Ovary (tissue), 10 donors: ENCODE measurements at regions of chr20 and their contacts with region 1.

Region 1: DNA sequence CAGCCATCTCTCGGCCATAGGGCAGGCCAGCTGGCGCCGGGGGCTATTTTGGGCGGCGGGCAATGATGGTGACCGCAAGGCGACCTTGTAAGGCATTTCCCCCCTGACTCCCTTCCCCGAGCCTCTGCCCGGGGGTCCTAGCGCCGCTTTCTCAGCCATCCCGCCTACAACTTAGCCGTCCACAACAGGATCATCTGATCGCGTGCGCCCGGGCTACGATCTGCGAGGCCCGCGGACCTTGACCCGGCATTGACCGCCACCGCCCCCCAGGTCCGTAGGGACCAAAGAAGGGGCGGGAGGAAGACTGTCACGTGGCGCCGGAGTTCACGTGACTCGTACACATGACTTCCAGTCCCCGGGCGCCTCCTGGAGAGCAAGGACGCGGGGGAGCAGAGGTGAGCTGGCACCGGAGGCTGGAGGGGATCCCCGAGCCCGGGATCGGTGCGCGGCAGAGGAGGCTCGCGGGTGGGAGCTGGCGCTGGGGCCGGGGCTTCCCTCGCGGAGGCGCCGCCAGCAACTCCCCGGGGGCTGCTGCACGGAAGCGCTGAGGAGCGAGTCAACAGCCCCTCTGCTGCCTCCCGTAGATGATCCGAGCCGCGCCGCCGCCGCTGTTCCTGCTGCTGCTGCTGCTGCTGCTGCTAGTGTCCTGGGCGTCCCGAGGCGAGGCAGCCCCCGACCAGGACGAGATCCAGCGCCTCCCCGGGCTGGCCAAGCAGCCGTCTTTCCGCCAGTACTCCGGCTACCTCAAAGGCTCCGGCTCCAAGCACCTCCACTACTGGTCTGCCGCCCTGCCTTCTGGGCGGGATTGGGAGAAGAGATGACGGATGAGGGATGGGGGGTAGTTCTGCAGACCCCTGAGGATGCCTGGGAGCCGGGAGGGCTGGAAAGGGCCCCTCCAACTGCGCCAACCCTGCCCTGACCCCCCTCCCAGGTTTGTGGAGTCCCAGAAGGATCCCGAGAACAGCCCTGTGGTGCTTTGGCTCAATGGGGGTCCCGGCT is at the starts of genes CTSA and NEURL2:
- DNase-seq: peak; percentile 95 to 97 (median 96)
- H3K4me3 ChIP-seq: peak within 1 kb of the TSS; percentile 53
- H3K27ac ChIP-seq: peak within 1 kb of the TSS; percentile 72 to 97
- H3K4me1 ChIP-seq: peaks cover 9% of the 10 kb centered on the region
- H3K27me3 ChIP-seq: no peaks in the 10 kb centered on the region
- CTCF ChIP-seq: peak in 1 of 3 donors; percentile 21
- EP300 ChIP-seq: peak; percentile 81
- POLR2A ChIP-seq: peak; percentile 73
- total RNA-seq, gene CTSA: 45.0 to 156 (median 110) TPM
- total RNA-seq, gene NEURL2: 10.1 to 28.7 (median 12.5) TPM

Region 2: DNA sequence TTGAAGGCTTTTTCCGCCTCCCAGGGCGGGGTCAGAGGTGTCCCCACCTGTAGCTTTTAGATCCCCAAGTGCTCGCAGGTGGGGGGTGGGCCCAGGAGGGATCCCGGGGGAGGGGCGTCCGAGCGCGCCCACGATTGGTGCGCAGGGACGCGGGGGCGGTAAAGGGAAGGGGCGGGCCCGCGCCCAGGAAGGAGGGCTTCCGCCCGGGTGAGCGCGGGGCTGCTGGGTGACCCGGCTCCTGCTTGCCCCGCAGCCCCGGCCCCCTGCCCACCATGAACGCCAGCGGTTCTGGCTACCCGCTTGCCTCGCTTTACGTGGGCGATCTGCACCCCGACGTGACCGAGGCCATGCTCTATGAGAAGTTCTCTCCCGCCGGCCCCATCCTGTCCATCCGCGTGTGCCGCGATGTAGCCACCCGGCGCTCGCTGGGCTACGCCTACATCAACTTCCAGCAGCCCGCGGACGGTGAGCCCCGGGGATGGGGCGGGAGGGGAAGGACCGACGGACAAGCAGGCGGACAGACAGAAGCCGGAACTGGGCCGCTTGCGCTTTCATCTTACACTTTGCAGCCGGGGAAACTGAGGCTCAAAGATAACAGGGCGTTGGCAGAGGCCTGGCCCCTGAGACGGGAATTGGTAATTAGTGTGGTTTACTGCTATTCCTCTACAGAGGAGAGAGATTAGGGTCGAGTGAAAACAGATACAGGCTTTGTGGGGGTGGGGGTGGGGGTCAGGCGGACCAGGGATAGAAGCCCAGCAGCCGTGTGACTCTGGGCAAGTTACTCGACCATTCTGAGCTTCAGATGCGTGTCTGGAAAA is 981.2 kb before region 1 on chr20 and contains the start of gene PABPC1L:
- intact Hi-C with region 1: no loop called
- DNase-seq: peak; percentile 51 to 77 (median 62)
- H3K4me3 ChIP-seq: peak within 1 kb of the TSS; percentile 59
- H3K27ac ChIP-seq: no peak within 1 kb of the TSS
- H3K4me1 ChIP-seq: no peaks in the 10 kb centered on the region
- H3K27me3 ChIP-seq: no peaks in the 10 kb centered on the region
- CTCF ChIP-seq: no peak
- EP300 ChIP-seq: no peak
- POLR2A ChIP-seq: no peak
- total RNA-seq, gene PABPC1L: 17.9 to 34.9 (median 22.9) TPM

Region 3: GRCh38 chr20:45487231-45487635 is 404.1 kb before region 1 on chr20:
- intact Hi-C with region 1: no loop called
- DNase-seq: no peak
- H3K4me3 ChIP-seq: no peak overlapping the region
- H3K27ac ChIP-seq: no peak overlapping the region
- H3K4me1 ChIP-seq: no peaks in the 10 kb centered on the region
- H3K27me3 ChIP-seq: no peaks in the 10 kb centered on the region
- CTCF ChIP-seq: no peak
- EP300 ChIP-seq: no peak
- POLR2A ChIP-seq: no peak

Region 4: DNA sequence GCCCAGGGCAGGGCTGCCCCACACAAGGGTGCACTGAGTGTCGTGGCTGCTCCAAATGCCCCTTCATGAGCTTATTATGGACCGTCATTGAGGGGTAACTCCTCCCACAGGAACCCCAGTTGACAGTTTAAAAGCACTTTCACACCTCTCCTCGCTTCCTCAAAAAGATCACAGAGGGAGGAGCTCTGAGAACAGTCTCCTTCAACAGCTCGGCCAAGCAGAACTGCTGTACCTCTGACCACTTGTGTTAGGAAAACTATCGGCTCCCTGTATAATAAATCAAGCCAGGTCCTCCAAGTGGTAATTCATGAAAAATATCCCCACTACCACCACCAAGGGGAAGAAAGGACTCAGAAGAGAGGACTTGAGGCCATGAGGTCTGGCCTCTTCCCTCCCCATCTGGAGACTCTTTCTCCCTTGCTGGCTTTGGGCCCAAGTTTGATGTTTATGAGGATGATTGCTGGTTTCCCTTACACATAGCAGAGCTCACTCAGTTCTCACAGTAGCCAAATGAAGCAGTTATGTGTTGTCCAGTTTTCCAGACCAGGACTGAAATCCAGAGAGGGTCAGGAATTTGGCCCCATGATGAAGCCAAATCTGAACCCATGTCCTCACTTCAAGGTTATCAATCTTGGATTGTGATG is 49.0 kb before region 1 on chr20:
- intact Hi-C with region 1: loop called in 1 of 4 experiments (anchors 5 kb)
- DNase-seq: peak in 2 of 5 donors; percentile 51 to 65
- H3K4me3 ChIP-seq: no peak overlapping the region
- H3K27ac ChIP-seq: peak overlapping the region in 1 of 2 donors; percentile 62
- H3K4me1 ChIP-seq: peaks cover 6% of the 10 kb centered on the region
- H3K27me3 ChIP-seq: no peaks in the 10 kb centered on the region
- CTCF ChIP-seq: peak in 1 of 3 donors; percentile 24
- EP300 ChIP-seq: no peak
- POLR2A ChIP-seq: no peak

Region 5: GRCh38 chr20:45946149-45946970 is 55.1 kb after region 1 on chr20:
- intact Hi-C with region 1: loop called in 3 of 4 experiments (anchors 5 to 10 kb)
- DNase-seq: peak; percentile 78 to 89 (median 84)
- H3K4me3 ChIP-seq: no peak overlapping the region
- H3K27ac ChIP-seq: peak overlapping the region; percentile 85 to 88
- H3K4me1 ChIP-seq: peaks cover 16% of the 10 kb centered on the region
- H3K27me3 ChIP-seq: no peaks in the 10 kb centered on the region
- CTCF ChIP-seq: no peak
- EP300 ChIP-seq: no peak
- POLR2A ChIP-seq: no peak

Region 6: GRCh38 chr20:45971675-45972499 is 80.6 kb after region 1 on chr20 and contains the start of gene ZNF335:
- intact Hi-C with region 1: loop called in 2 of 4 experiments (anchors 5 to 10 kb)
- DNase-seq: peak; percentile 95 to 98 (median 96)
- H3K4me3 ChIP-seq: peak within 1 kb of the TSS; percentile 70
- H3K27ac ChIP-seq: peak within 1 kb of the TSS; percentile 98 to 100
- H3K4me1 ChIP-seq: peaks cover 4% of the 10 kb centered on the region
- H3K27me3 ChIP-seq: no peaks in the 10 kb centered on the region
- CTCF ChIP-seq: peak; percentile 31 to 86 (median 82)
- EP300 ChIP-seq: peak; percentile 69
- POLR2A ChIP-seq: peak; percentile 64
- total RNA-seq, gene ZNF335: 14.2 to 25.7 (median 20.0) TPM